Heart right ventricle (tissue), 16 donors: ENCODE measurements at regions of chr10 and their contacts with region 1.

Region 1: GRCh38 chr10:38010119-38010903 is at the start of gene ZNF33A:
- DNase-seq: peak; percentile 89 to 92
- ATAC-seq: peak; percentile 92 to 99 (median 96)
- H3K4me3 ChIP-seq: peak within 1 kb of the TSS; percentile 29 to 80 (median 70)
- H3K27ac ChIP-seq: peak within 1 kb of the TSS; percentile 94 to 99 (median 98)
- H3K4me1 ChIP-seq: peaks cover 0 to 17% (median 9%) of the 10 kb centered on the region in 9 donors
- H3K27me3 ChIP-seq: no peaks in the 10 kb centered on the region
- CTCF ChIP-seq: peak in 1 of 9 donors; percentile 36
- total RNA-seq, gene ZNF33A: 16.8 to 27.7 (median 23.2) TPM

Region 2: DNA sequence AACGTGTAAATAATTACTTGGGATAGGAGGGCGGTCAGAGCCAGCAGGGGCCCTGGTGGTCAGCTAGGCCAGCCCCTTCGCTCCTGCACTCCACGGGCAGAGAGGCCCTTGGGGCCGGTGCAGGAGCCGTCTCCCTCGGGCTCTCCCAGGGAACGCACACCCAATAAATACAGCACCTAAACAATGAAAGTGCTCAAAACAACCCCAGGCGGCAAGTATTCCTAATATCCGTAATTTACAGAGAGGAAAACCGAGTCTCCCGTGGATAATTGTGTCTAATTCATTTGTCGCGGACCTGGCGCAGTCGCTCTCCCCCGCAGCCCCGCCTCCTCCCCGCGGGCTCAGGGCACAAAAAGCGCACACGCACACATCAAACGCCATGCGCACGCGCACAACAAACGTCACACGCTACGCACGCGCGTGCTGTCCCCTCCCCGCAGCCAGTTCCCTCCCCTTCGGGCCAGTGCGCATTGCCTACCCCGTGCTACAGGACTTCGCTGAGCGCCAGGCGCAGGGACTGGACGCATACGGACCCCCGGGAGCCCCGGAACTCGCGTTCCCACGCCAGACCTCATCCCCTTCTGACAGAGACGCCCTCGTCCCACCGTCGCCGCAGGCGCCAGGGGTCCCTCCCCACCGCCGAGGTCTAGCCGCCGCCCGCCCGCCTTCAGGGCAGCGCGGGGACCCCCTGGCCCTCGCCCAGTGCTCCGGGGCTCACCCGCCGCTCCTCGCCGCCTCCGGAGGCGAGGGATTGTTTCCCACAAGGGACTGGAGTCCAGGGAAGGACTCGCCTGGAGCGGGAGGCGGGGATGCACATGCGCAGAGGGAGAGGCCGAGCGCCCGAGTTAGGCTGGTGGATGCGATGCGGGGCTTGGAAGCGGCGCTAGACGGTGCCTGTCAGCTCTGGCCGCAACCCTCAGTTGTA is 152.8 kb before region 1 on chr10 and contains the start of gene ZNF248:
- intact Hi-C with region 1: loop called in 2 of 10 experiments (anchors 5 to 10 kb)
- DNase-seq: peak; percentile 96 to 97
- ATAC-seq: peak; percentile 99 to 100 (median 99)
- H3K4me3 ChIP-seq: peak within 1 kb of the TSS; percentile 57 to 98 (median 88)
- H3K27ac ChIP-seq: peak within 1 kb of the TSS; percentile 99 to 100 (median 100)
- H3K4me1 ChIP-seq: peaks cover 0 to 36% (median 32%) of the 10 kb centered on the region in 9 donors
- H3K27me3 ChIP-seq: no peaks in the 10 kb centered on the region
- CTCF ChIP-seq: peak in 3 of 9 donors; percentile 20 to 22 (median 20)
- total RNA-seq, gene ZNF248: 7.4 to 13.9 (median 9.1) TPM